ENCODE measurements at regions of chr2 and their contacts with region 1.

Region 1: DNA sequence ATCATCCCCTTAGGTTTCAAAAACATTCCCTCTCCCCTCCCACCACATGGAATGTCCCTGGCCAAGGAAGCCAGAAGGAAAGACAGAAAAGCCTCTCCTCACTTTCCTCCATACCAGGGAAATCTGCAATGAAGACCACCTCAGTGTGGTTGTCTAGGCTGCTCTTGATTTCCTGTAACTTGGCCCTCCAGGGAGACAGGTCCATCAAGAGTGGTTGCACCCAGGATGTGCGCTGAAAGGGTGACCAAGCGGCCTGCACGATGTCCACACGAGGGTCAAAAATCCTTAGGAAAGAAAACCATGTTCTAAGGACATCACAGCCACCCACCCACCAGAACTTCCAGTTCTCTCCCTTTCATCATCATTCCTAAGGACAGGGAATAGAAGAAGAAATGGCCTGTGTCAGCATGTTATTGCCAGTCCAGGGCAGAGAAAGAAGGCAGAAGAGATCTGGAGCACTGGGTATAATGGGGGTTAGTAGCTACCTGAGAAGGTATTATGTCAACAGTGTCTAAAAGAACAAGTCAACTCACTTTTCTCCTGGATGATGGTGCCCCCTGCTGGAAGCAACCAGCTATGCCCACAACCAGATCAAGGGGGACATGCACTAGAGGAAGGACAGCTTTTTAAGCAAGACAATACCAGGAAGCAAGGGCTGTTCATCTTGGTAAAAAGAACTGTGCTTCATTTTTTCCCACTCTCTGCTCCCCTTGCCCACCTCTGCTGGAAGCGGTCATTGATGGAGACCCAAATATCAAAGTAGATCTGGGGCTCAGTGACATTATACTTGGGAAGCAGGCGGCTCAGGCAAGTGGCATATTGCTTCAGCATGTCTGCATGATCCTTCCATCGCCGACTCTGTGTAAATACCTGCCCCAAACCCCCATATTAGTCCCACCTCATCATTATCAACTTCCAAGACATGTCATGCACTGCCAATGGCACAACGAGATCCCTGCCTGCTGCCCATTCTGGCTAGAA is 9.3 kb downstream of the GGCX start:
- DNase-seq: peak; percentile 73
- H3K4me3 ChIP-seq: no peak overlapping the region
- H3K27ac ChIP-seq: no peak overlapping the region
- H3K4me1 ChIP-seq: peaks cover 0 to 13% of the 10 kb centered on the region in 2 experiments; a peak in 2 of 4 replicates
- H3K27me3 ChIP-seq: no peaks in the 10 kb centered on the region
- CTCF ChIP-seq: peak; percentile 94
- EP300 ChIP-seq: no peak
- RAD21 ChIP-seq: peak; percentile 97

Region 2: DNA sequence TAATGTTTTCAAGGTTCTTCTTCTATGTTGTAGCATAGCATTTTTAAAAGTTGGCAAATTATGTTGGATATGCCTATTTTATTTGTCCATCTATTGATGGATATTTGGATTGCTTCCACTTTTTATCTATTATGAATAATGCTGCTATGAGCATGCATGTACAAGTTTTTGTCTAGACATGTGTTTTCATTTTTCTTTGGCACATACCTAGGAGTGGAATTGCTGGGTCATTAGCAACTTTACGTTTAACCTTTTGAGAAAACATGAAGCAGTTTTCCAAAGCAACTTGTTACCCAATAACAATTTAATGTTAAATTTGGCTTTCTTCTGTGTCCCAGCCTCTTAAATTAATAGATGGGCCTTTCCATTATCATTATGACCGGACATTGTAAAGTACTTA is 1005.4 kb before region 1 on chr2:
- CTCF ChIA-PET with region 1: no interaction called
- POLR2A ChIA-PET with region 1: no interaction called
- DNase-seq: no peak
- H3K4me3 ChIP-seq: no peak overlapping the region
- H3K27ac ChIP-seq: no peak overlapping the region
- H3K4me1 ChIP-seq: no peaks in the 10 kb centered on the region
- H3K27me3 ChIP-seq: peaks cover 8% of the 10 kb centered on the region; the same call in 1 of the 2 replicates
- CTCF ChIP-seq: no peak
- EP300 ChIP-seq: no peak
- RAD21 ChIP-seq: no peak

Region 3: GRCh38 chr2:85390941-85391669 is 160.9 kb before region 1 on chr2:
- CTCF ChIA-PET with region 1: interaction called, 44 read pairs
- POLR2A ChIA-PET with region 1: no interaction called
- DNase-seq: peak; percentile 60
- H3K4me3 ChIP-seq: no peak overlapping the region
- H3K27ac ChIP-seq: no peak overlapping the region
- H3K4me1 ChIP-seq: peaks cover 0 to 13% of the 10 kb centered on the region in 2 experiments; a peak in 1 of 4 replicates
- H3K27me3 ChIP-seq: no peaks in the 10 kb centered on the region
- CTCF ChIP-seq: peak; percentile 53
- EP300 ChIP-seq: no peak
- RAD21 ChIP-seq: peak; percentile 73

Region 4: GRCh38 chr2:85430752-85431569 is 121.0 kb before region 1 on chr2:
- CTCF ChIA-PET with region 1: interaction called, 43 read pairs
- POLR2A ChIA-PET with region 1: interaction called, 10 read pairs
- DNase-seq: peak; percentile 79
- H3K4me3 ChIP-seq: no peak overlapping the region
- H3K27ac ChIP-seq: no peak overlapping the region; a peak in 1 of 4 replicates
- H3K4me1 ChIP-seq: peaks cover 0 to 56% of the 10 kb centered on the region in 2 experiments; a peak in 2 of 4 replicates
- H3K27me3 ChIP-seq: no peaks in the 10 kb centered on the region
- CTCF ChIP-seq: no peak
- EP300 ChIP-seq: no peak
- RAD21 ChIP-seq: no peak

Region 5: GRCh38 chr2:85437488-85438284 is 114.3 kb before region 1 on chr2:
- CTCF ChIA-PET with region 1: interaction called, 9 read pairs
- POLR2A ChIA-PET with region 1: interaction called, 14 read pairs
- DNase-seq: peak; percentile 97
- H3K4me3 ChIP-seq: peak overlapping the region in 1 of 2 experiments; percentile 42; a peak in 2 of 4 replicates
- H3K27ac ChIP-seq: peak overlapping the region; percentile 58 to 90
- H3K4me1 ChIP-seq: peaks cover 14 to 63% of the 10 kb centered on the region in 2 experiments; a peak in 3 of 4 replicates
- H3K27me3 ChIP-seq: no peaks in the 10 kb centered on the region
- CTCF ChIP-seq: no peak
- EP300 ChIP-seq: peak; percentile 19 to 51; a peak in 2 of 4 replicates
- RAD21 ChIP-seq: no peak

Region 6: DNA sequence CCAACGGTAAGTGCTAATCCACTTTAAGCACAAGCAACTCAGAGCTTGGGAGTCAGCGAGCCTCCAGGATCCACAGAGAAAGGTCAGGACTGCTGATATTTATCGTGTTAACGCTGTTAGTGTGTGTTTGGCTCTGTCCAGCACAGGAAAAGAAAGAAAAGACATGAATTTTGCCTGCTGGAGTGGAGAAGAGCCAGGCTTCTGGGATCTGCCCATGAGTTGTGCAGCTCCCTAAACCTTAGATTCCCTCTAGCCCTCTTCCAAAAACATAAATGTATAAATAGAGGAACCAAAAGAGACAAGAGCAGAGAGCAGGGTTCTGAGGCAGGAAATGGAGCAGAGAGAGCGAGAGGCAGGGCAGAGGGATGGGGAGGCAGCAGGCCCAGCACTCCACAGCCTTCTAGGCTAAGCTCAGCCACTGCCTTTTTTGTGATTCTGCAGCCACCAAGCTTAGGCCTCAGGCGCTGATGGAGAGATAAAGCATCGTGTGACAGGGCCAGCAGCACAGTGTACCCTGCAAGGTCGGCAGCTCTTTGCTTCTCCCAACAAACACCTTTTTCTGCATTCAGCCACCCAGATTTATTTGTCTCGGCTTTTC is 27.6 kb before region 1 on chr2:
- CTCF ChIA-PET with region 1: interaction called, 13 read pairs
- POLR2A ChIA-PET with region 1: interaction called, 4 read pairs
- DNase-seq: peak; percentile 75
- H3K4me3 ChIP-seq: no peak overlapping the region
- H3K27ac ChIP-seq: peak overlapping the region; percentile 40 to 98; a peak in 3 of 4 replicates
- H3K4me1 ChIP-seq: peaks cover 9 to 30% of the 10 kb centered on the region in 2 experiments; a peak in 3 of 4 replicates
- H3K27me3 ChIP-seq: no peaks in the 10 kb centered on the region; the same call in 1 of the 2 replicates
- CTCF ChIP-seq: no peak
- EP300 ChIP-seq: peak in 1 of 2 experiments; percentile 82; a peak in 2 of 4 replicates
- RAD21 ChIP-seq: peak; percentile 43

Region 7: GRCh38 chr2:85602476-85603234 is 50.7 kb after region 1 on chr2 and contains the start of gene TMEM150A:
- CTCF ChIA-PET with region 1: interaction called, 12 read pairs
- POLR2A ChIA-PET with region 1: interaction called, 3 read pairs
- DNase-seq: peak; percentile 97
- H3K4me3 ChIP-seq: peak within 1 kb of the TSS; percentile 93 to 98
- H3K27ac ChIP-seq: peak within 1 kb of the TSS; percentile 71 to 75
- H3K4me1 ChIP-seq: peaks cover 6 to 22% of the 10 kb centered on the region in 2 experiments; a peak in 2 of 4 replicates
- H3K27me3 ChIP-seq: no peaks in the 10 kb centered on the region
- CTCF ChIP-seq: peak; percentile 41
- EP300 ChIP-seq: no peak
- RAD21 ChIP-seq: no peak
- polyA plus RNA-seq, gene TMEM150A: 20.2 TPM in 2 replicates

Region 8: DNA sequence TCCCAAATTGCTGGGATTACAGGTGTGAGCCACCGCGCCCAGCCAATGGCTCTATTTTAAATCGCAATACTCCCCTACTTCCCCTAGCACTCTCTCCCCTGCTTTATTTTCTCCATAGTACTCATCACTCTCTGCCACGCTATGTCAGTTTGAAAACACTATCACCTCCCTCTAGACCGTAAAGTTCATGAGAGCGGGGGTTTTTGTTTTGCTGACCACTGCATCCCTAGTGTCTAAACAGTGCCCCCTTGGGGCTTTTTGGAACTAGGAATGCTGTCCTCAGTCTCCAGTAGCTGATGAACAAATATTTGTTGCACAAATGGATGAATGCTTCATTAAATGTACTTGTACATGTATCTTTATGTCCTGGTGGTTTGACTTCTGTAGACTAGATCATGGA is 245.9 kb after region 1 on chr2:
- CTCF ChIA-PET with region 1: no interaction called
- POLR2A ChIA-PET with region 1: no interaction called
- DNase-seq: peak; percentile 72
- H3K4me3 ChIP-seq: no peak overlapping the region
- H3K27ac ChIP-seq: no peak overlapping the region
- H3K4me1 ChIP-seq: peaks cover 23 to 27% of the 10 kb centered on the region in 2 experiments; a peak in 3 of 4 replicates
- H3K27me3 ChIP-seq: no peaks in the 10 kb centered on the region
- CTCF ChIP-seq: peak; percentile 66
- EP300 ChIP-seq: no peak
- RAD21 ChIP-seq: peak; percentile 79